ENCODE measurements at regions of chr6 and their contacts with region 1.

Region 1: DNA sequence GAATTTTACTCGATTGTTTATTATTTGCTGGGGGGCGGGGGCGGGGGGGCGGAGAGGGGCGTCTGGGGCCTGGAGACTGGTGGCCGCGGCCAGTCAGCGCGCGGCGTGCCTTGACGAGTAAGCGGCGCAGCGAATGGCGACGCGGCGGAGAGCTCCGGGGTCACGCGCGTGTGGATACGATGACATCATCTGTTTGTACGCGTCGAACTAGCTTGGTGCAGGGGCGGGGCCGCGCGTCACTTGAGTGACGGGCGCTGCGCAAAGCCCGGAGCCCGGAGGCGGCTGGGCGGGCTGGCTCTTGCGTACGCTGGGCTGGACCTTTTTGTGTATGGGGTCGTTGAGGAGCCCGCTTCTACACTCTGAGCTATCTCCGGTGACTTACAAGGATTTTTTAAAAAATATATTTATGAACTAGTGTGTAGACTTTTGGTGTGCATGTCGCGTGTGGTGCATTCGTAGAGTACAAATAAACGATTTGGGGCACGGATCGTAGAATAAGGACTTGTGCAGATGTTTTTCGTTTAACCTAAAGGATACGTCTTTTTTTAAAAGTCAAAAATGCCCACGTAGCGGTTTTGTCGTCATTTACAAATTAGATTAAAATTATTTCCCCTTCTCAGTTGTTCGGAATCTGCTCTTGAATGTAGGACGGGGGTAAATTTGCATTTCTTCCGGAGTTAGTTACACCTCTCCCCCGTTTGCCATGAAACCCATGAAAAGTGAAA is 2.2 kb upstream of the FOXO3 start:
- DNase-seq: peak; percentile 98
- ATAC-seq: peak; percentile 71
- H3K4me3 Mint-ChIP-seq: peak overlapping the region; percentile 83
- H3K27ac Mint-ChIP-seq: peak overlapping the region; percentile 89
- H3K4me1 Mint-ChIP-seq: peaks cover 21% of the 10 kb centered on the region
- H3K27me3 Mint-ChIP-seq: peaks cover 14% of the 10 kb centered on the region

Region 2: DNA sequence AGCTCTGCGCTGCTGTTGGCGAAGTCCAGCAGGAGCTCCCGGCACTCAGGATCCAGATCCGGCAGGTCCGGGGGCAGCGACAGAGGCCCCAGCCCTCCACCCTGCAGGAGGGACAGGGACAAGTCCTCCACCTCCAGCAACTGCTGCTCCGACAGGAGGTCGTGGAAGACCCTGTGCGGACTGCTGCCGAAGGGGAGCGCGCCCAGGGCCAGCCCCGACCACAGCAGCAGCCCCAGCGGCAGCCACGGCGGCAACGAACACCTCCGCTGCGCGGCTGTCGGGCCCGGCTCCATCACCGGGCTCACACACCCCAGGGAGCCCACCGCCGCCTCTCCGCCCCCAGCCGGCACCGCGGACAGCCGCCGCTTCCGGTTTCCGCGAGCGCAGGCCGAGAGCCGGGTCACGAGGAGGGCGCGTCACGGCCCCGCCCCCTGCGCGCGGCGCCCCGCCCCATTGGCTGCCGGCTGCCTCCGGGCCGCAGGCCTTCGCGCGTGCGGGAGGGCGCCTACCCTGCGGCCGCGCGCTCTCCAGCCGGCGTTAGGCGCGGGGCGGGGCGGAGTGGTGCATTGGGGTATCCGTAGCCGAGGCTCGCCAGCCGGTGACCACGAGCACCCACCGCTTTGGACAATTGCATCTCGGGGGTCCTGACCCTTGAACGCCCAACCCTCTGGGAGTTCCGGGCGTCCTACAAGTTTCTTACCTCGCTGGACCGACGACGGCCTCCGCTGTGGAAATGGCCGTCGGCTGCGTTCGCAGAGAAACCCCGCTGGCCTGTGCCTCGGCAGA is 484.0 kb before region 1 on chr6 and contains the start of gene OSTM1:
- CTCF ChIA-PET with region 1: no interaction called
- POLR2A ChIA-PET with region 1: interaction called, 4 read pairs
- intact Hi-C with region 1: loop called in 1 of 2 experiments (anchors 1 kb)
- DNase-seq: peak; percentile 96
- ATAC-seq: peak; percentile 98
- H3K4me3 Mint-ChIP-seq: peak within 1 kb of the TSS; percentile 76
- H3K27ac Mint-ChIP-seq: peak within 1 kb of the TSS; percentile 80
- H3K4me1 Mint-ChIP-seq: peaks cover 19% of the 10 kb centered on the region
- H3K27me3 Mint-ChIP-seq: peaks cover 3% of the 10 kb centered on the region
- total RNA-seq, gene OSTM1: 5.5 to 7.3 TPM

Region 3: GRCh38 chr6:108186226-108186625 is 372.3 kb before region 1 on chr6:
- CTCF ChIA-PET with region 1: no interaction called
- POLR2A ChIA-PET with region 1: no interaction called
- intact Hi-C with region 1: no loop called
- DNase-seq: no peak
- ATAC-seq: no peak
- H3K4me3 Mint-ChIP-seq: no peak overlapping the region
- H3K27ac Mint-ChIP-seq: no peak overlapping the region
- H3K4me1 Mint-ChIP-seq: no peaks in the 10 kb centered on the region
- H3K27me3 Mint-ChIP-seq: peaks cover 36% of the 10 kb centered on the region

Region 4: GRCh38 chr6:108598305-108598863 is 39.9 kb after region 1 on chr6:
- CTCF ChIA-PET with region 1: no interaction called
- POLR2A ChIA-PET with region 1: no interaction called
- intact Hi-C with region 1: loop called in 1 of 2 experiments (anchors 5 kb)
- DNase-seq: peak; percentile 33
- ATAC-seq: peak; percentile 95
- H3K4me3 Mint-ChIP-seq: no peak overlapping the region
- H3K27ac Mint-ChIP-seq: no peak overlapping the region
- H3K4me1 Mint-ChIP-seq: peaks cover 21% of the 10 kb centered on the region
- H3K27me3 Mint-ChIP-seq: no peaks in the 10 kb centered on the region

Region 5: DNA sequence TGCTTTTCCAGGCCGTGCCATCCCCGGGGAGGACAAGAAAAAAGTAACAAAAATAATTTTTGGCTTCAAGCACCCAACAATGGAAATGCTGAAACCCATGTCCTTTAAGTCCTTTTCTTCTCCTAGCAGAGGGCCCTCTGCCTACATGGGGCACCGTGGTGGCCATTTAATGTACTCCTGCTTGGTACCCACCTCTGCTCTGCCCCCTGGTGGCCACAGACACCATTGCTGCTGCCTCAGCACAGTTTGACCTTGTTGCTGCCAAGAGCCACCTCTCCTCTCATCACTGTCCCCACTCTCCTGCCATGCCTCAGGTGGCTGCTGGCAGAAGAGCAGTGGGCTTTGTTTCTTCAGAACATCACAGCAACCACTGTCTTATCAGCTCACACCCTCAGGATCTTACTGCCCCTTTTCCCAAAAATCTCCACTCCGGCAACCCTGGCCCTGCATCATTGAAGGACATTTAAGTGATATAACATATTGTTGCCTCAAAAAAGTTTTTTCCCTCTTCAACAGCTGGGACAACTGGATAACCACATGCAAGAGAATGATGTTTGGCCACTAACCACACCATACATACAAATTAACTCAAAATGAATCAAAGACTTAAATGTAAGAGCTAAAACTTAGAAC is 276.8 kb after region 1 on chr6:
- CTCF ChIA-PET with region 1: no interaction called
- POLR2A ChIA-PET with region 1: no interaction called
- intact Hi-C with region 1: loop called in 1 of 2 experiments (anchors 5 kb)
- DNase-seq: peak; percentile 93
- ATAC-seq: peak; percentile 96
- H3K4me3 Mint-ChIP-seq: no peak overlapping the region
- H3K27ac Mint-ChIP-seq: no peak overlapping the region
- H3K4me1 Mint-ChIP-seq: peaks cover 20% of the 10 kb centered on the region
- H3K27me3 Mint-ChIP-seq: no peaks in the 10 kb centered on the region

Region 6: GRCh38 chr6:109073344-109074132 is 515.0 kb after region 1 on chr6:
- CTCF ChIA-PET with region 1: interaction called, 4 read pairs
- POLR2A ChIA-PET with region 1: no interaction called
- intact Hi-C with region 1: loop called in 1 of 2 experiments (anchors 5 kb)
- DNase-seq: peak; percentile 55
- ATAC-seq: peak; percentile 66
- H3K4me3 Mint-ChIP-seq: no peak overlapping the region
- H3K27ac Mint-ChIP-seq: no peak overlapping the region
- H3K4me1 Mint-ChIP-seq: peaks cover 19% of the 10 kb centered on the region
- H3K27me3 Mint-ChIP-seq: no peaks in the 10 kb centered on the region

Region 7: DNA sequence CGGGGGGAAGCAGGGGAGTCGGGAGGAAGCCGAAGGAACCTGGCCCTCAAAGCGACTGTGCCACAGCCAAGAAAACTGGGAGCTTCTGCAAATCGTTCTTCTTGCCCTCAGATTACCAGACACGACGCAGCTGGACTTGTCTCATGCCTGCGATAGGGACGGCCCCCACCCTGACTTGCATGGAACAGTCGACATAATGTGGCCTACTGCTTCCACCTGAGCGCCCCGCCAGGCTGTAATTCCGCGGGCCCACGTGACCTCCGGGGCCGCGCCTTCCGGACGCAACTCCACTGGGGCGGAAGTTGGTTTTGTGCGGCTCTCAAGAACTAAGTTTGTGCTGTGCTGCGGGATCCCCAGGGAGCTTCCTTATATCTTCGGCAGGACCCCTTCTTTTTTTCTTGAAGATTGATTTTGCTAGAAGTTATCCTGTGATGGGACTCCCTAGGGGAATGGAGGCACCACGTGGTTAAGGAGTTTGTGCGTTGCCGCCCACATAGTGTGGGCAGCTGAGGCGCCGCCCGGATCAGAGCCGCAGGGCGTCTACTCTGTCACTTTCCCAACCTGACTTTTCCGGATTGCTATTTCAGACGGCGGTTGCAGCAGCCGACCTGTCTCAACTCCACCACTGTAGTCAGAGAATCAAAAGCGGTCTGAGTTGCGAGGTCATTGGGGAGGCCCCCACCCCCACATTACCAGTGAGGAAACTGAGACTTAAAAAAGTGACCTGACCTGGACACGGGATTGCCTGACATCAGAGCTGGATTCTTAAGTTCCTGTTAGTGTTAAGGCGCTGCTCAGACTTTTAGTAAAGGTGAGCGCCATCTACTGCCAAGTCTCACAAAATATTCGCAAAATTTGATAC is 824.3 kb after region 1 on chr6:
- CTCF ChIA-PET with region 1: no interaction called
- POLR2A ChIA-PET with region 1: no interaction called
- intact Hi-C with region 1: loop called (anchors 1 to 2 kb)
- DNase-seq: peak; percentile 95
- ATAC-seq: peak; percentile 67
- H3K4me3 Mint-ChIP-seq: peak overlapping the region; percentile 98
- H3K27ac Mint-ChIP-seq: peak overlapping the region; percentile 99
- H3K4me1 Mint-ChIP-seq: peaks cover 25% of the 10 kb centered on the region
- H3K27me3 Mint-ChIP-seq: no peaks in the 10 kb centered on the region

Measured in activated CD4-positive, alpha-beta T cell treated with anti-CD3 and anti-CD28 coated beads for 36 hours (primary cell).